ENCODE measurements at regions of chr20 and their contacts with region 1.

Region 1: DNA sequence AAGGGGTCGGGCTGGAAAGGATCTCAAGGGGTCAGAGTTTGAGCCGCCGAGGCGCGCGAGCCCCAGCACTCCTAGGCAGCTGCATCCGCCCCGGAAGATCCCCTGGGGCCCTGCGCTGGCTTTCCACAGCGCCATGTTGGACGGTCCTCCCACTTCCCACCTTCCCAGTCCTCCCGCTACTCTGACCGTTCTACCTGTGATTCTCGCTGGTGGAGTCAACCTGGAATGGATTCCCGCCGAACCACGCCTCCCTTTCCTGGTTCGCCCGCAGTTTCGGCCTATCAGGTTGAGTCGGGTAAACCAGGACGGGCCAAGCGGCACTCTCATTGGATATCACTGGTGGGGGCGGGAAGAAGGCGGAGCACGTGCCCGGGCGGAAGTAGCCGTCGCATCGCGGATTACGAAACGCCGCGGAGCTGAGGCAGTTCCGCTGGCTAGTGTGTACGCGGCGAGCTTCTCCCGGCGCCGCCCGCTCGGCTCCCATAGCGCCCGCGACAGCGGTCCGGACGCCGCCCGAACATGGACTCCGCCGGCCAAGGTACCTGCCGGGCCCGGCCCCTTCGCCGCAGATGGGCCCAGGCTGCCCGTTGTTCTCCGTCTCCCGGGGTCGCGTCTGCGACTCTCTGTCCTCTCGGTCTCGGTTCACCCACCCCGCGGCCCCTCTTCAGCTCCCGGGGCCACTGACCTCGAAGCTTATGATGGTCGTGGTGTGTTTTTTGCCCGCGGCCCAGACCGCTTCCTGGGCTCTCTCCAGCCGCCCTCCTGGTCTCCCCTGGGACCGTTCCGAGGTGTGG is at the start of gene TPD52L2:
- DNase-seq: peak; percentile 86 to 98 (median 96)
- ATAC-seq: peak; percentile 91
- H3K4me3 ChIP-seq: peak within 1 kb of the TSS; percentile 74
- H3K4me3 Mint-ChIP-seq: peak within 1 kb of the TSS; percentile 88 to 100 (median 98)
- H3K27ac ChIP-seq: peak within 1 kb of the TSS; percentile 84
- H3K27ac Mint-ChIP-seq: peak within 1 kb of the TSS; percentile 91 to 99 (median 97)
- H3K4me1 ChIP-seq: peaks cover 11 to 14% of the 10 kb centered on the region in 2 donors
- H3K4me1 Mint-ChIP-seq: peaks cover 27 to 42% (median 36%) of the 10 kb centered on the region in 7 donors
- H3K27me3 ChIP-seq: no peaks in the 10 kb centered on the region
- H3K27me3 Mint-ChIP-seq: no peaks in the 10 kb centered on the region
- total RNA-seq, gene TPD52L2: 33.7 to 56.8 (median 43.2) TPM

Region 2: GRCh38 chr20:63520504-63520933 is 344.5 kb before region 1 on chr20 and contains the start of gene PPDPF:
- CTCF ChIA-PET with region 1: no interaction called
- POLR2A ChIA-PET with region 1: interaction called, 12 read pairs
- intact Hi-C with region 1: loop called in 1 of 2 experiments (anchors 1 kb)
- DNase-seq: peak; percentile 76 to 92 (median 84)
- ATAC-seq: peak; percentile 96
- H3K4me3 ChIP-seq: peak within 1 kb of the TSS; percentile 86
- H3K4me3 Mint-ChIP-seq: peak within 1 kb of the TSS; percentile 65 to 89 (median 81)
- H3K27ac ChIP-seq: peak within 1 kb of the TSS; percentile 88
- H3K27ac Mint-ChIP-seq: peak within 1 kb of the TSS in 7 of 9 donors; percentile 51 to 88 (median 79)
- H3K4me1 ChIP-seq: peaks cover 11 to 14% of the 10 kb centered on the region in 2 donors
- H3K4me1 Mint-ChIP-seq: peaks cover 4 to 22% (median 9%) of the 10 kb centered on the region in 7 donors
- H3K27me3 ChIP-seq: no peaks in the 10 kb centered on the region
- H3K27me3 Mint-ChIP-seq: peaks cover 0 to 7% (median 0%) of the 10 kb centered on the region in 5 donors
- total RNA-seq, gene PPDPF: 138 to 225 (median 184) TPM

Region 3: DNA sequence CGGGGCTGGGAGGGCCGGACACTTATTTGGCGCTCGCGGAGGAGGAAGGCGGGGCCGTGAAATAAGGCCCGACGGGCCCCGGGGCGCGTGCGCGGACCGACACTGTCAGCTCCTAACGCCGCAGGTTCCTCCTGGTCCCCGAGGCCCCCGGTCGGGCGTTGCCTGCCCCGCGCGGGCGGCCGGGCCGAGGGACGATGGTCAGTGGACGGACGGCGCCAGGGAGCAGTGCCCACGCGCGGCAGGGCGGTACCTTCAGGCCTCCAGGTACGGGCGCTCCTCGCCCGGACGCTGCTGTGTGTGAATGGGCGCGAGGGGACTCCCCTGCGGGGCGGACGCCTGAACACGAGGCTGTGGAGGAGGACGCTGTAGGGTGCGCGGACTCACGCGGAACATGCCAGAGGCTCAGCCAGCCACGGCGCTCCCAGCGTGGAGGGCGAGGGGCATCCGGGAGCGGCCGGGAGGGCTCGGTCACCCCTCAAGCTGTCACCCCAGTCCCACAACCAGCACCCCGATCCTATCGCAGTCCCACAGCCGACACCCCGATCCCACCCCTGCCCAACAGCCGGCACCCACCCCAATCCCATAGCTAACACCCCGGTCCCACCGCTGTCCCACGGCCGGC is 237.8 kb before region 1 on chr20:
- CTCF ChIA-PET with region 1: no interaction called
- POLR2A ChIA-PET with region 1: no interaction called
- intact Hi-C with region 1: loop called in 1 of 2 experiments (anchors 1 kb)
- DNase-seq: peak; percentile 74 to 99 (median 97)
- ATAC-seq: peak; percentile 93
- H3K4me3 ChIP-seq: peak overlapping the region; percentile 96
- H3K4me3 Mint-ChIP-seq: peak overlapping the region; percentile 93 to 99 (median 98)
- H3K27ac ChIP-seq: peak overlapping the region; percentile 85
- H3K27ac Mint-ChIP-seq: peak overlapping the region; percentile 79 to 98 (median 95)
- H3K4me1 ChIP-seq: peaks cover 29 to 40% of the 10 kb centered on the region in 2 donors
- H3K4me1 Mint-ChIP-seq: peaks cover 28 to 64% (median 42%) of the 10 kb centered on the region in 7 donors
- H3K27me3 ChIP-seq: no peaks in the 10 kb centered on the region
- H3K27me3 Mint-ChIP-seq: no peaks in the 10 kb centered on the region

Region 4: GRCh38 chr20:63739130-63740069 is 125.6 kb before region 1 on chr20 and contains the start of gene SLC2A4RG:
- CTCF ChIA-PET with region 1: interaction called, 3 read pairs
- POLR2A ChIA-PET with region 1: interaction called, 12 read pairs
- intact Hi-C with region 1: loop called (anchors 1 to 10 kb)
- DNase-seq: peak; percentile 49 to 86 (median 69)
- ATAC-seq: peak; percentile 62
- H3K4me3 ChIP-seq: peak within 1 kb of the TSS; percentile 99
- H3K4me3 Mint-ChIP-seq: peak within 1 kb of the TSS; percentile 33 to 92 (median 80)
- H3K27ac ChIP-seq: peak within 1 kb of the TSS; percentile 71
- H3K27ac Mint-ChIP-seq: peak within 1 kb of the TSS in 1 of 9 donors; percentile 38
- H3K4me1 ChIP-seq: peaks cover 21 to 29% of the 10 kb centered on the region in 2 donors
- H3K4me1 Mint-ChIP-seq: peaks cover 7 to 20% (median 16%) of the 10 kb centered on the region in 7 donors
- H3K27me3 ChIP-seq: no peaks in the 10 kb centered on the region
- H3K27me3 Mint-ChIP-seq: no peaks in the 10 kb centered on the region
- total RNA-seq, gene SLC2A4RG: 88.7 to 136 (median 111) TPM

Region 5: GRCh38 chr20:63894358-63895201 is 29.5 kb after region 1 on chr20 and contains the start of gene DNAJC5:
- CTCF ChIA-PET with region 1: no interaction called
- POLR2A ChIA-PET with region 1: interaction called, 5 read pairs
- intact Hi-C with region 1: loop called (anchors 1 kb)
- DNase-seq: peak; percentile 96 to 99 (median 98)
- ATAC-seq: peak; percentile 95
- H3K4me3 ChIP-seq: peak within 1 kb of the TSS; percentile 56
- H3K4me3 Mint-ChIP-seq: peak within 1 kb of the TSS; percentile 86 to 99 (median 96)
- H3K27ac ChIP-seq: peak within 1 kb of the TSS; percentile 94
- H3K27ac Mint-ChIP-seq: peak within 1 kb of the TSS; percentile 94 to 98 (median 97)
- H3K4me1 ChIP-seq: peaks cover 21% of the 10 kb centered on the region in 2 donors
- H3K4me1 Mint-ChIP-seq: peaks cover 34 to 49% (median 43%) of the 10 kb centered on the region in 7 donors
- H3K27me3 ChIP-seq: no peaks in the 10 kb centered on the region
- H3K27me3 Mint-ChIP-seq: peaks cover 0 to 2% (median 0%) of the 10 kb centered on the region in 5 donors
- total RNA-seq, gene DNAJC5: 35.5 to 56.8 (median 50.3) TPM

Region 6: GRCh38 chr20:64024141-64024990 is 159.3 kb after region 1 on chr20:
- CTCF ChIA-PET with region 1: no interaction called
- POLR2A ChIA-PET with region 1: no interaction called
- intact Hi-C with region 1: no loop called
- DNase-seq: no peak
- ATAC-seq: no peak
- H3K4me3 ChIP-seq: no peak overlapping the region
- H3K4me3 Mint-ChIP-seq: no peak overlapping the region
- H3K27ac ChIP-seq: no peak overlapping the region
- H3K27ac Mint-ChIP-seq: peak overlapping the region in 1 of 9 donors; percentile 20
- H3K4me1 ChIP-seq: no peaks in the 10 kb centered on the region
- H3K4me1 Mint-ChIP-seq: peaks cover 0 to 12% (median 3%) of the 10 kb centered on the region in 7 donors
- H3K27me3 ChIP-seq: no peaks in the 10 kb centered on the region
- H3K27me3 Mint-ChIP-seq: no peaks in the 10 kb centered on the region

Region 7: DNA sequence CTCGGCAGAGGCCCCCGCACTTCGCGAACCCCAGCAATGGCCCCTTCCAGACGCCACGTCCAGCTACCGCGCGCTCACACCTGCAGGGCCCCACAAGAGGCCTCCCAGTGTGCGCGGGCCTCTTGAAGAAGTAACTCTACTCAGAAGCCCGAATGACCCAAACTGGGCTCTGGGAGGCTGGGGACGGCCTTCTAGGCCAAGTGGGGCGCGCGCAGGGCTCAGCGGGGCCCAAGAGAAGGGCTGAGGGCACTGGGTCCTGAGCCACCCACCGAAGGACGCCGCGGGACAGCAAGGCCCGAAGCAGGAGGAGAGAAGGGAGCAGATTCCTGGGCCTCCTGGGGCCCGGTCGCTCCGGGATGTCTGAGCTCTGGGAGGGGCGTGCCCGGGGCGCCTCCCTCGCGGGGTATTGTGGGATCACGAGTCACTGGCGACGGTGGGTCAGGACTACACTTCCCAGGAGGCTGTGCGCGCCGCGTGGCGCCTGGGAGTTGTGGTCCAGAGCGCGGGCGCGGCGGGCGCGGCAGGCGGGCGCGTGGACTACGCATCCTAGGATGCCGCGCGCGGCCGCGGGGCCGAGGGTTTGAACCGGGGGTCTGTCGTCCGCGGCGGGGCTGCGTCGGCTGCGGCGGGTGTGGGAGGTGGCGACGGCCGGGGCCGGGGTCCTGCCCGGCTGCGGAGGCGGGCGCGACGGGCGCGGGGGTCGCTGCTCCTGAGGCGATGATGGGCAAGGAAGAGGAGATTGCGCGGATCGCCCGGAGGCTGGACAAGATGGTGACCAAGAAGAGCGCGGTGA is 197.7 kb after region 1 on chr20 and contains the start of gene TCEA2:
- CTCF ChIA-PET with region 1: no interaction called
- POLR2A ChIA-PET with region 1: no interaction called
- intact Hi-C with region 1: loop called (anchors 1 to 10 kb)
- DNase-seq: peak; percentile 85 to 95 (median 90)
- ATAC-seq: peak; percentile 97
- H3K4me3 ChIP-seq: peak within 1 kb of the TSS; percentile 56
- H3K4me3 Mint-ChIP-seq: peak within 1 kb of the TSS; percentile 83 to 95 (median 88)
- H3K27ac ChIP-seq: peak within 1 kb of the TSS; percentile 74
- H3K27ac Mint-ChIP-seq: peak within 1 kb of the TSS; percentile 69 to 95 (median 79)
- H3K4me1 ChIP-seq: peaks cover 23 to 40% of the 10 kb centered on the region in 2 donors
- H3K4me1 Mint-ChIP-seq: peaks cover 30 to 54% (median 37%) of the 10 kb centered on the region in 7 donors
- H3K27me3 ChIP-seq: no peaks in the 10 kb centered on the region
- H3K27me3 Mint-ChIP-seq: no peaks in the 10 kb centered on the region
- total RNA-seq, gene TCEA2: 35.5 to 73.2 (median 47.3) TPM

Measured in naive thymus-derived CD4-positive, alpha-beta T cell (primary cell).